ENCODE measurements at regions of chr4 and their contacts with region 1.

Region 1: GRCh38 chr4:121950212-121950679 is 1.6 kb downstream of the TRPC3 start:
- DNase-seq: peak; percentile 95
- H3K4me3 Mint-ChIP-seq: peak overlapping the region; percentile 92
- H3K27ac Mint-ChIP-seq: peak overlapping the region; percentile 48
- H3K4me1 Mint-ChIP-seq: peaks cover 14% of the 10 kb centered on the region
- H3K27me3 Mint-ChIP-seq: peaks cover 64% of the 10 kb centered on the region

Region 2: GRCh38 chr4:121869841-121870656 is 80.2 kb before region 1 on chr4 and contains the start of gene BBS7:
- intact Hi-C with region 1: loop called (anchors 5 kb)
- DNase-seq: peak; percentile 99
- H3K4me3 Mint-ChIP-seq: peak within 1 kb of the TSS; percentile 98
- H3K27ac Mint-ChIP-seq: peak within 1 kb of the TSS; percentile 91
- H3K4me1 Mint-ChIP-seq: peaks cover 12% of the 10 kb centered on the region
- H3K27me3 Mint-ChIP-seq: peaks cover 12% of the 10 kb centered on the region
- total RNA-seq, gene BBS7: 18.3 and 18.7 TPM in 2 replicates

Region 3: GRCh38 chr4:122003335-122003734 is 53.1 kb after region 1 on chr4:
- intact Hi-C with region 1: no loop called
- DNase-seq: peak; percentile 60
- H3K4me3 Mint-ChIP-seq: no peak overlapping the region
- H3K27ac Mint-ChIP-seq: no peak overlapping the region
- H3K4me1 Mint-ChIP-seq: peaks cover 8% of the 10 kb centered on the region
- H3K27me3 Mint-ChIP-seq: peaks cover 15% of the 10 kb centered on the region

Region 4: GRCh38 chr4:122224348-122224747 is 274.1 kb after region 1 on chr4:
- intact Hi-C with region 1: loop called (anchors 5 kb)
- DNase-seq: peak; percentile 65
- H3K4me3 Mint-ChIP-seq: no peak overlapping the region
- H3K27ac Mint-ChIP-seq: no peak overlapping the region
- H3K4me1 Mint-ChIP-seq: peaks cover 2% of the 10 kb centered on the region
- H3K27me3 Mint-ChIP-seq: no peaks in the 10 kb centered on the region

Region 5: DNA sequence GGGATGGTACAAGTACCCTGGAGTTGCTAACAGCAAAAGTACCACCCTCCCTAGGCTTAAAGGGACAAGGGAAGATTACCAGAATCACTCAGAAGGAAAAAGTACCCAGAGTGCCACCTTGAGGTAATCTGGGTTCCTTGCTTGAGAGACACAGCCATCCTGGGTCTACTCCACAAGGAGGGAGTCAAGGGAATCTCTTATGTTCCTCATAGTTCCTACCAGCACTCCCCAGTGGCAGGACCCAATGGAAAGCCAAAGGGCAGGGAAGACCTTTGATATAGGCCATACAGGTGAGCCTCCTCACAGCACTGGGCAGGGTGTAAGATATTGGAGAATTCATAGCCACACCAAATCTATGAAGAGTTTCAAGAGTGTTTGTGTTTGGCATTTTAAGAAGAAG is 500.6 kb after region 1 on chr4:
- intact Hi-C with region 1: loop called (anchors 5 kb)
- DNase-seq: peak; percentile 69
- H3K4me3 Mint-ChIP-seq: peak overlapping the region; percentile 74
- H3K27ac Mint-ChIP-seq: peak overlapping the region; percentile 92
- H3K4me1 Mint-ChIP-seq: peaks cover 24% of the 10 kb centered on the region
- H3K27me3 Mint-ChIP-seq: no peaks in the 10 kb centered on the region